ENCODE measurements at regions of chr3 and their contacts with region 1.

Region 1: GRCh38 chr3:152471814-152472671 is 203.3 kb downstream of the MBNL1 start:
- DNase-seq: peak; percentile 37
- ATAC-seq: peak; percentile 85
- H3K4me3 ChIP-seq: no peak overlapping the region; the same call in 1 of the 2 replicates
- H3K27ac ChIP-seq: no peak overlapping the region
- H3K4me1 ChIP-seq: no peaks in the 10 kb centered on the region
- H3K27me3 ChIP-seq: no peaks in the 10 kb centered on the region
- CTCF ChIP-seq: peak; percentile 61 to 65 (median 65)
- EP300 ChIP-seq: no peak
- POLR2A ChIP-seq: no peak
- RAD21 ChIP-seq: peak; percentile 65

Region 2: DNA sequence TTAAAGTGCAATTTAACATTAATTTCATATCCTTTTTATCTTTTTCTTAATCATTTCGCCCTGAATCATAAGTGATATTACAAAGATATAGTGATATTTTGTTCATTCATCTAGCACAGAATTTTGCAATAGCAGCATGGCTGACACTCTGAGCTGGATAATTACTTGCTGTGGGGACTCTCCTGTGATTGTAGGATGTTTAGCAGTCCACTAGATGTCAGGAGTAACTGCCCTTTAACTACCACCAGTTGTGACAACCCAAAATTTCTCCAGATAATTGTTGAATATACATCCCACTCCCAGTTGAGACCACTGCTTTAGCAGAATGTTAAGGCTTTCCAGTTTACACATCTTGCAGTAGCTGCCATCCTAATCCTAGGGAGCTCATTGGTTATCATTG is 400.1 kb before region 1 on chr3:
- CTCF ChIA-PET with region 1: interaction called, 54 read pairs
- POLR2A ChIA-PET with region 1: interaction called, 3 read pairs
- RAD21 ChIA-PET with region 1: interaction called, 25 read pairs
- SMC1A ChIA-PET with region 1: interaction called, 34 read pairs
- in situ Hi-C with region 1: no loop called
- intact Hi-C with region 1: loop called (anchors 2 kb)
- DNase-seq: no peak
- ATAC-seq: peak; percentile 96
- H3K4me3 ChIP-seq: no peak overlapping the region
- H3K27ac ChIP-seq: no peak overlapping the region
- H3K4me1 ChIP-seq: no peaks in the 10 kb centered on the region
- H3K27me3 ChIP-seq: no peaks in the 10 kb centered on the region
- CTCF ChIP-seq: peak; percentile 47 to 64 (median 60)
- EP300 ChIP-seq: no peak
- POLR2A ChIP-seq: no peak
- RAD21 ChIP-seq: peak; percentile 53

Region 3: GRCh38 chr3:152419748-152420147 is 52.3 kb before region 1 on chr3:
- CTCF ChIA-PET with region 1: no interaction called
- POLR2A ChIA-PET with region 1: no interaction called
- RAD21 ChIA-PET with region 1: no interaction called
- SMC1A ChIA-PET with region 1: no interaction called
- in situ Hi-C with region 1: no loop called
- intact Hi-C with region 1: no loop called
- DNase-seq: no peak
- ATAC-seq: no peak
- H3K4me3 ChIP-seq: no peak overlapping the region
- H3K27ac ChIP-seq: no peak overlapping the region
- H3K4me1 ChIP-seq: no peaks in the 10 kb centered on the region; the same call in 1 of the 2 replicates
- H3K27me3 ChIP-seq: no peaks in the 10 kb centered on the region
- CTCF ChIP-seq: no peak
- EP300 ChIP-seq: no peak
- POLR2A ChIP-seq: no peak
- RAD21 ChIP-seq: no peak

Region 4: GRCh38 chr3:152491922-152492321 is 19.9 kb after region 1 on chr3:
- CTCF ChIA-PET with region 1: interaction called, 16 read pairs
- POLR2A ChIA-PET with region 1: interaction called, 3 read pairs
- RAD21 ChIA-PET with region 1: interaction called, 3 read pairs
- SMC1A ChIA-PET with region 1: interaction called, 29 read pairs
- in situ Hi-C with region 1: no loop called
- intact Hi-C with region 1: no loop called
- DNase-seq: no peak
- ATAC-seq: peak; percentile 93
- H3K4me3 ChIP-seq: no peak overlapping the region
- H3K27ac ChIP-seq: no peak overlapping the region
- H3K4me1 ChIP-seq: peaks cover 5% of the 10 kb centered on the region; the same call in 1 of the 2 replicates
- H3K27me3 ChIP-seq: no peaks in the 10 kb centered on the region
- CTCF ChIP-seq: no peak
- EP300 ChIP-seq: peak; percentile 69 to 83
- POLR2A ChIP-seq: no peak
- RAD21 ChIP-seq: no peak

Region 5: GRCh38 chr3:152519376-152519775 is 47.3 kb after region 1 on chr3:
- CTCF ChIA-PET with region 1: interaction called, 379 read pairs
- POLR2A ChIA-PET with region 1: interaction called, 3 read pairs
- RAD21 ChIA-PET with region 1: interaction called, 84 read pairs
- SMC1A ChIA-PET with region 1: interaction called, 165 read pairs
- in situ Hi-C with region 1: loop called (anchors 10 kb)
- intact Hi-C with region 1: loop called (anchors 1 kb)
- DNase-seq: no peak
- ATAC-seq: peak; percentile 72
- H3K4me3 ChIP-seq: no peak overlapping the region
- H3K27ac ChIP-seq: no peak overlapping the region
- H3K4me1 ChIP-seq: peaks cover 5% of the 10 kb centered on the region
- H3K27me3 ChIP-seq: no peaks in the 10 kb centered on the region
- CTCF ChIP-seq: no peak
- EP300 ChIP-seq: no peak; a peak in 1 of 4 replicates
- POLR2A ChIP-seq: no peak
- RAD21 ChIP-seq: no peak

Region 6: DNA sequence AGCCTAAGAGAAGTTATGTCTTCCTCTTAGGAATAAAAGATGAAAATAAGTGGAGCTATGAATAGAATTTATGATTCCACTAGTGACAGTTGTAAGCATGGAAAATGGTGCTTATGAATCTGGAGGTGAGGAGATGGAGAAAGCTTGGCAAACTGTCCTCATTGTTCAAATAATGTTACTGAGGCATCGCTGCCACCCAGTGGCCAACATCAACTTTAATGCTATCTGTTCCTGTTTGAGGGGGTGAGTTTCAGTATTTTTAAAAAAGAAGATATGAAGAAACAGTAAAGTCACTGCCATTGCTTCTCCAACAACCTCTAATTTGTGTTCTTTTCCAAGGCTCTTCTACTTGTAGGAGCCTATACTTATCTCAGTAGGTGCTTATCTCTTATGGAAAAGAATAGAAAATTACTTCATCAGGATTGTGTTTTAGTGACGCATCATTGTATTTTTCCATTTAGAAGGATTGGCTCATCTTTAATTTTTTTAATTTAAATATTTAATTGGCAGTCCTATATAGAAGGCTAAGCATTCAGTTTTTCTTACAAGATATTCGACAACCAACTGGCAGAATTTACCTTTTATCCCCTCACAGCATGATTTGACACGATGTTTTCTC is 102.5 kb after region 1 on chr3:
- CTCF ChIA-PET with region 1: interaction called, 38 read pairs
- POLR2A ChIA-PET with region 1: no interaction called
- RAD21 ChIA-PET with region 1: interaction called, 18 read pairs
- SMC1A ChIA-PET with region 1: interaction called, 30 read pairs
- in situ Hi-C with region 1: loop called (anchors 5 kb)
- intact Hi-C with region 1: loop called (anchors 1 kb)
- DNase-seq: peak; percentile 26
- ATAC-seq: peak; percentile 95
- H3K4me3 ChIP-seq: no peak overlapping the region
- H3K27ac ChIP-seq: no peak overlapping the region
- H3K4me1 ChIP-seq: no peaks in the 10 kb centered on the region; the same call in 1 of the 2 replicates
- H3K27me3 ChIP-seq: no peaks in the 10 kb centered on the region
- CTCF ChIP-seq: peak; percentile 38 to 69 (median 52); a peak in 5 of 6 replicates
- EP300 ChIP-seq: no peak
- POLR2A ChIP-seq: no peak
- RAD21 ChIP-seq: peak; percentile 87

Region 7: DNA sequence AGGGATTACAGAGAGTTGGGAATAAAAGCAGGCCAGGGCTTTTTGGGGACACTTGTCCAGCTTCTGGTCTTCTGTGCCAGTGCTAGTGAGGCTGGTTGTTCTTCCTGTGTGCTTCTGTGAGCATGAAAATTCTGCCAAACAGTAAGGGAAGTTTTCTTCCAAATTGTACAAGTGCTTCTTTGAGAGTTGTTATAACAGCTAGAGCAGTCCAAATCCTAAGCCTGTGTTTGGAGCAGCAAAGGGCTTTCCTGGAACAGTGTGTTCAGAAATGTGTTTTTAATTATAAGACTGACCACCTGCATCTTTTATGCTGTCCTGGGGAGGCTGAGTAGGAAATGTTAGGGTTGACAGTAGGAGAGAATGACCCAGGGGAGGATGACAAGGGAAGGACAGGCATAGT is 139.9 kb after region 1 on chr3:
- CTCF ChIA-PET with region 1: no interaction called
- POLR2A ChIA-PET with region 1: no interaction called
- RAD21 ChIA-PET with region 1: no interaction called
- SMC1A ChIA-PET with region 1: no interaction called
- in situ Hi-C with region 1: no loop called
- intact Hi-C with region 1: no loop called
- DNase-seq: no peak
- ATAC-seq: no peak
- H3K4me3 ChIP-seq: no peak overlapping the region
- H3K27ac ChIP-seq: no peak overlapping the region
- H3K4me1 ChIP-seq: no peaks in the 10 kb centered on the region
- H3K27me3 ChIP-seq: no peaks in the 10 kb centered on the region
- CTCF ChIP-seq: no peak
- EP300 ChIP-seq: no peak
- POLR2A ChIP-seq: no peak
- RAD21 ChIP-seq: no peak

Region 8: GRCh38 chr3:152720941-152721718 is 249.1 kb after region 1 on chr3:
- CTCF ChIA-PET with region 1: no interaction called
- POLR2A ChIA-PET with region 1: no interaction called
- RAD21 ChIA-PET with region 1: no interaction called
- SMC1A ChIA-PET with region 1: no interaction called
- in situ Hi-C with region 1: no loop called
- intact Hi-C with region 1: no loop called
- DNase-seq: no peak
- ATAC-seq: no peak
- H3K4me3 ChIP-seq: no peak overlapping the region
- H3K27ac ChIP-seq: no peak overlapping the region
- H3K4me1 ChIP-seq: no peaks in the 10 kb centered on the region
- H3K27me3 ChIP-seq: no peaks in the 10 kb centered on the region
- CTCF ChIP-seq: no peak
- EP300 ChIP-seq: no peak
- POLR2A ChIP-seq: no peak
- RAD21 ChIP-seq: no peak

Region 9: GRCh38 chr3:152937234-152937633 is 465.2 kb after region 1 on chr3:
- CTCF ChIA-PET with region 1: no interaction called
- POLR2A ChIA-PET with region 1: no interaction called
- RAD21 ChIA-PET with region 1: no interaction called
- SMC1A ChIA-PET with region 1: no interaction called
- in situ Hi-C with region 1: no loop called
- intact Hi-C with region 1: loop called (anchors 10 kb)
- DNase-seq: no peak
- ATAC-seq: no peak
- H3K4me3 ChIP-seq: no peak overlapping the region
- H3K27ac ChIP-seq: no peak overlapping the region
- H3K4me1 ChIP-seq: no peaks in the 10 kb centered on the region
- H3K27me3 ChIP-seq: no peaks in the 10 kb centered on the region; a peak in 1 of 4 replicates
- CTCF ChIP-seq: peak in 1 of 3 experiments; percentile 14; a peak in 2 of 6 replicates
- EP300 ChIP-seq: no peak
- POLR2A ChIP-seq: no peak
- RAD21 ChIP-seq: peak; percentile 48